ENCODE measurements at regions of chr13 and their contacts with region 1.

Region 1: DNA sequence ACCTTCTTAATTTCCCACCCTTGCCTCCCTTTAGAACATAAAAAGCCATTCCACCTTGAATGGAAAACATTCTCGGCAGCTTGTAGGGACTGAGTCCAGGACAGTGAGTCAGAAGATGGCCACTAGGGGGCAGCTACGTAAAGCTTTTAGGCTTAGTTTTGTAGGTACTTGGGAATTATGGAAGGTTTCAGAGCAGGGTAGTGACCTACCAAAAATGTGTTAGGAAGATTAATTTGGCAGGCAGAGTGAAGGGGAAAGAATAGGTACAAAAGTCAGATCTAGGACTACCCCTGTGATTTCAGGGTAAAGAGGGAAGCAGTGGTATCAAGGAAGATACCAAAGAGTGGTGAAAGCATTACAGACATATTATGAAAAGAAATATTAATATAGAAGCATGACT is 198.4 kb downstream of the NDFIP2 start:
- DNase-seq: peak; percentile 83
- H3K4me3 ChIP-seq: no peak overlapping the region
- H3K27ac ChIP-seq: no peak overlapping the region
- H3K4me1 ChIP-seq: no peaks in the 10 kb centered on the region
- H3K27me3 ChIP-seq: no peaks in the 10 kb centered on the region
- CTCF ChIP-seq: peak; percentile 70 to 80
- POLR2A ChIP-seq: no peak

Region 2: DNA sequence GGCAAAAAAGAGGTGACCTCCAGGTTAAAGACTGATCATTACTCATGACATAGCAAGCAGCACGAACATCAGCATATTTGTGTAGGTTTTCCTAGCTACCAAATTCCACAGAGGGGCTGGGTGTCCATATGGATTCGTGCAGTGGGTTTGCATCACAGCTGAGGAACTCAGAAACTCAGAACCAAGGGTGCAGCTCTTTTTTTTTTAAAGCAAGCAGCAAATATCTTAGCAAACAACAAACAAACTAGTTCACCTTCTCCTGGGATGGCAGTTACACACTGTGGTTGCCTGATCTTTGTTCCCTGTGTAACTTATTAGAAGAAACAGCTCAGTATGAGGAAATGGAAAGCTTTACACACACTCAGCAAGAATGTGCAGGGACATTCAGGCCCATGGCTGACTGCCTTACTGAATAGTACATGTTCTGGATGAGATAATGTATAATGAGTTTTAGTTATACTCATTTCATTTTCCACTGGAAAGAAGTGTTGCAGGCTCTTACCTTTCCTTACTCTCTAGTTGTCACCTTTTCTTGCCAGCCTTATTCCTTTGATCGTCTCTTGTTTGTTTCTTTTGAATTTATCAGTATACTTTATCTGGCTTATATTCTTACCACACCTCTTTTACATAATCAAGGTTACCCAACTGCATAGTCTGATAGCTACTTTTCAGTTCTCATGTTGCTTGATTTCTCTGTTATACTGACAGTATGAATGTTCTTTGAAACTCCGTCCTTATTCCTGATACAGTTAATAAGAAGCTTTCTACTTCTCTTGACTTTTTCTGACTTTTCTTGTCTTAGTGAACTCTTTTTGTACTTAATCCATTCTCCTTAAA is 194.1 kb before region 1 on chr13:
- CTCF ChIA-PET with region 1: no interaction called
- POLR2A ChIA-PET with region 1: no interaction called
- dilution Hi-C with region 1: no loop called
- intact Hi-C with region 1: no loop called
- DNase-seq: no peak
- H3K4me3 ChIP-seq: no peak overlapping the region
- H3K27ac ChIP-seq: no peak overlapping the region
- H3K4me1 ChIP-seq: peaks cover 9% of the 10 kb centered on the region
- H3K27me3 ChIP-seq: peaks cover 0 to 3% of the 10 kb centered on the region in 2 experiments
- CTCF ChIP-seq: no peak
- POLR2A ChIP-seq: no peak

Region 3: DNA sequence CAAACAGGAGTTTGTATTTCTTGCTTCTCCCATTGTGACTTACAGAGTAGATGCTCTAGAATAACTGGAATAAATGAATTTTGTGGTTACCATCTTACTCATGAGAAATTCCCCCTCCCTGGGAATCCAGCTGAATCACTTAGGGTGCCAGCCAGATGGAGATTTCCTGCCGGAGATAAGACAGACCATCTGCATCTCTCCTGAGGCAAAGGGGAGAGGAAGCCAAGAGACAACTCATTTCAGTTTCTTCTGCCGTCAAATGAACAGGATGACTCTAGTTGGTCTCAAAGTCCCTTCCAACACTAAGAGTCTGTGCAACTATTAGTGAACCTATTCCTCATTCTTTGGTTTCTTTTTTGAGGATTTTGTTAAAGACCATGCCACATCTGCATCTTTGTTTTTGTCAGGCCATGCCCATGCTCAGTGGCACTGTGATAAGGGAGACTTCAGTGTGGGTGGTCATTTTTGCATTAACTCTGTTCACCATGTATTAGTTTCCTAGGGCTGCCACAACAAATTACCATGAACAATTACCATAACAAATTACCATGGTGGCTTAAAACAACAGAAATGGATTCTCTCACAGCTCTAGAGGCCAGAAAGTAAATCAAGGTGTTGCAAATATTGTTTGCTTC is 85.6 kb before region 1 on chr13:
- CTCF ChIA-PET with region 1: no interaction called
- POLR2A ChIA-PET with region 1: no interaction called
- dilution Hi-C with region 1: no loop called
- intact Hi-C with region 1: no loop called
- DNase-seq: no peak
- H3K4me3 ChIP-seq: no peak overlapping the region
- H3K27ac ChIP-seq: no peak overlapping the region
- H3K4me1 ChIP-seq: no peaks in the 10 kb centered on the region
- H3K27me3 ChIP-seq: peaks cover 0 to 2% of the 10 kb centered on the region in 2 experiments
- CTCF ChIP-seq: no peak
- POLR2A ChIP-seq: no peak

Region 4: GRCh38 chr13:79668201-79668752 is 11.1 kb before region 1 on chr13:
- CTCF ChIA-PET with region 1: interaction called, 21 read pairs
- POLR2A ChIA-PET with region 1: no interaction called
- dilution Hi-C with region 1: no loop called
- intact Hi-C with region 1: no loop called
- DNase-seq: no peak
- H3K4me3 ChIP-seq: no peak overlapping the region
- H3K27ac ChIP-seq: no peak overlapping the region
- H3K4me1 ChIP-seq: no peaks in the 10 kb centered on the region
- H3K27me3 ChIP-seq: no peaks in the 10 kb centered on the region
- CTCF ChIP-seq: no peak
- POLR2A ChIP-seq: no peak

Region 5: DNA sequence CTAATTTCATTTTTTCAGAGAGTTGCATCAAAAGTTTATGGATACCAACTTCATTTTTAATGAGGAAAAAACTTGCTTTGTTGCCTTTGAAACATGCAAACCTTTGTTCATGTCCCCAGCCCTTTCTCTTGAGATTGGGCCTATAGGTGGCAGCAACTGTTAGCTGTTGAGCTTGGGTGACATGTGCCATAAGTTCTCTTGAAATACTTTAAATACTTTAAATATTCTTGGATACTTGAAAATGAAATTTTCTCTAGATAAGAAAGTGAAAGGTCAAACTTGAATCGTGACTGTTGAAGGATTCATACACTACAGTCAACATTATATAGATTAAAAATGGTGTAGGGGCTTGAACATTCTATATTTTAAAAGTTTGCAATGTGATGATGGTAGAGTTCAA is 96.5 kb after region 1 on chr13:
- CTCF ChIA-PET with region 1: interaction called, 18 read pairs
- POLR2A ChIA-PET with region 1: no interaction called
- dilution Hi-C with region 1: no loop called
- intact Hi-C with region 1: loop called (anchors 1 kb)
- DNase-seq: peak; percentile 87
- H3K4me3 ChIP-seq: no peak overlapping the region
- H3K27ac ChIP-seq: no peak overlapping the region
- H3K4me1 ChIP-seq: peaks cover 4% of the 10 kb centered on the region
- H3K27me3 ChIP-seq: no peaks in the 10 kb centered on the region
- CTCF ChIP-seq: peak; percentile 65 to 67
- POLR2A ChIP-seq: no peak

Region 6: DNA sequence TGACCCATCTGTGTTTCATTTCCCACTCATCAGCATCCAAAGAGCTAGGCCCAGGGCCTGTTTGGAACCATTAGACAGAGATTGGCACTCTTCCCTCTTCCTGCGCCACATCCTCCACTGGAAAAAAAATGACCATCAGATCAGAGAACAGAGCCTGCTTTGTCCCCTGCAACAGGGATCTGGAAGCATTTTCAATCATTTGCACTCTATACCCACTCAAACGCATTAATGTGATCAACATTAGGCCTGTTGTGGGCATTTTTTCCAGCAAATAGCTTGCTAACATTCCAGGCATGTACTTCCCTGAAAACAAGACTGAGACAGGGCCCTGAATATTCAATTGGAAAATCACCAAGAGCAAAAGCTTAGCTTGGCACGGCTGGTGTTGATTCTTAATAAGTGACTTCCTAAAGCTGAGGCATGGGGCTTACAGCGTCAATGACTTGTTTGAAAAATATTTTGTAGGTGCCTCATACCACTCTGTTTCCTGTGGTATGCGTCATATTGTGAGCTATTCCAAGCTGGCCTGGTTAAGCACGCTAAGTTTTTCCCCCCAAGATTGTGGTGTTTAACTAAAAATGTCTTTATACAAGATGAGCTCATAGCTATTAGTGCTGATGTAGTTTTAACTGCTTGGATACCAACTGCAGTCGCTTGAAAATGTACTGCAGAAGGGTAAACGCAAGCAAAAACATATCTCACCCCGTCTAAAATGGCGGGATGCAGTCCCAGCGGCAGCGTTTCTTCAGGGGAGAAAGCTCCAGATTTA is 257.2 kb after region 1 on chr13:
- CTCF ChIA-PET with region 1: interaction called, 15 read pairs
- POLR2A ChIA-PET with region 1: interaction called, 3 read pairs
- dilution Hi-C with region 1: no loop called
- intact Hi-C with region 1: loop called (anchors 2 kb)
- DNase-seq: peak; percentile 100
- H3K4me3 ChIP-seq: peak overlapping the region in 1 of 3 experiments; percentile 6
- H3K27ac ChIP-seq: peak overlapping the region; percentile 99
- H3K4me1 ChIP-seq: peaks cover 62% of the 10 kb centered on the region
- H3K27me3 ChIP-seq: no peaks in the 10 kb centered on the region
- CTCF ChIP-seq: no peak
- POLR2A ChIP-seq: no peak

Region 7: DNA sequence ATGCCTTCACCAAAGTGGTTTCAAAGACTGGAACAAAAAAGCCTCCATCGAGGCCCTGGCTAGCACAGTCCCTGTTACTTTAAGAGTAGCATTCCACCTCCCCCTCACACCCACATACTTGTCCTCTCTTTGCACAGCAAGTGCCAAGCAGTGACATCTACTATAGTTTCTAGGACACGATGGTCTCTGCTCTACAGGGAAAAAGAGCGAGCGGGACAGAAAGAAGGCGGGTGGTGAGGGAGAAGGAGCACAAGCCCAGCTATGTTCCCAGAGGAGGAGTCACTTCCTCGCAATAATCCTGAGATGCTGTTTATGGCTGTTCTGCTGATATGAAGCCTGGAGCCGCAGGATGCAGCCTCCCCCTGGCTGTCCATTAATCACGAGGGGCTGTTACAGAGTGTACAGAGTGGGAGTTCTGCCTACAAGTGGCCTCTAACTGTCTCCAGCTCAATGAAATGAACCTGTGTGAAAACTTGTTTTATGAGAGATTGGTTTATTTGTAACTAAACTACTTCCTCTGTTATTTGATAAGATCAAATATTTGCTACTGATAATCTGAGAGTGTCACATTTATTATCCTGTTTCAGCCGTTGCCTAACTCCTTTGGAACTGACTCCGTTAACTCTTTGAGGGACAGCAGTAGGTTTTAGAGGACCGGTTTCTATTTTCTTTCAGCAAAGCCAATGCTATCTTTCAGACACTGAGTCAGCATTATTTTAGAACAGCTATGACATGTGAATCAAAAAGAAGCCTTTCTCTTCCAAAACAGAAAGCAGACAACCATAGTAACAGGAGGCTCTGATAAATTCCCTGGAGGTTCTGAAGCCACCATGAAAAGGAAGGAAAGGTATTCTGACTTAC is 453.6 kb after region 1 on chr13:
- CTCF ChIA-PET with region 1: interaction called, 6 read pairs
- POLR2A ChIA-PET with region 1: no interaction called
- dilution Hi-C with region 1: no loop called
- intact Hi-C with region 1: loop called (anchors 10 kb)
- DNase-seq: peak; percentile 84
- H3K4me3 ChIP-seq: peak overlapping the region in 1 of 3 experiments; percentile 21
- H3K27ac ChIP-seq: peak overlapping the region; percentile 32
- H3K4me1 ChIP-seq: peaks cover 23% of the 10 kb centered on the region
- H3K27me3 ChIP-seq: no peaks in the 10 kb centered on the region
- CTCF ChIP-seq: no peak
- POLR2A ChIP-seq: no peak

Region 8: DNA sequence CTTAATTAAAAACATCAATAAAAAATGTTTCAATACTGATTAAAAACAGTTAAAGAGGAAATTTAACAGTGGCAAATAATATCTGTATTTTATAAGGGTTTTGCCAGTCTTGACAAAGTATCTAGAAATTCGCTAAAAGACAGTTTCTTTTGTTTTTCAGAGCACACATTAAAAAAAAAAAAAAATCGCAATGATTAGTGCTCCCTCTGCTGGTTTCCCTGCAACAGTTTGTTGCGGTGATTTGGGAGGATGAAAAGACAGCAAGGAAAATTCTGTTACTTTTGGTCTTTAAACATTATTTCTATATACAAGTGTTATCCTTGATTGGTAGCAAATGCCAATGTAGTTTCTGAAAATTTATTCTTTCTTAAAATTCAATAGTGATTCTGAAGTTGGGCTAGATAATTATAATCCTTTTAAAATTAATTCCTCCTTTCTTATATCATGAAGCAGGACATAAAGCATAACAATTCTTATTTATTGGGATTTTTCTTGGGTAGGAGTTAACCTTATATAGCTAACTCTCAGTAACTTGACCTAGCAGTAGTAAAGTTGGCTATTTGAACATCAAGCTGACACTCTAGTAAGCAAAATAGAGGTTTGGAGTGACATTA is 684.7 kb after region 1 on chr13:
- CTCF ChIA-PET with region 1: interaction called, 15 read pairs
- POLR2A ChIA-PET with region 1: no interaction called
- dilution Hi-C with region 1: no loop called
- intact Hi-C with region 1: loop called (anchors 1 kb)
- DNase-seq: peak; percentile 46
- H3K4me3 ChIP-seq: peak overlapping the region in 1 of 3 experiments; percentile 34
- H3K27ac ChIP-seq: no peak overlapping the region
- H3K4me1 ChIP-seq: peaks cover 5% of the 10 kb centered on the region
- H3K27me3 ChIP-seq: no peaks in the 10 kb centered on the region
- CTCF ChIP-seq: peak; percentile 62 to 65
- POLR2A ChIP-seq: no peak

Region 9: GRCh38 chr13:80510686-80511085 is 831.4 kb after region 1 on chr13:
- CTCF ChIA-PET with region 1: no interaction called
- POLR2A ChIA-PET with region 1: no interaction called
- dilution Hi-C with region 1: no loop called
- intact Hi-C with region 1: no loop called
- DNase-seq: no peak
- H3K4me3 ChIP-seq: no peak overlapping the region
- H3K27ac ChIP-seq: no peak overlapping the region
- H3K4me1 ChIP-seq: no peaks in the 10 kb centered on the region
- H3K27me3 ChIP-seq: no peaks in the 10 kb centered on the region
- CTCF ChIP-seq: no peak
- POLR2A ChIP-seq: no peak

Region 10: GRCh38 chr13:80979035-80979641 is 1299.8 kb after region 1 on chr13:
- CTCF ChIA-PET with region 1: interaction called, 21 read pairs
- POLR2A ChIA-PET with region 1: no interaction called
- dilution Hi-C with region 1: no loop called
- intact Hi-C with region 1: no loop called
- DNase-seq: peak; percentile 73
- H3K4me3 ChIP-seq: no peak overlapping the region
- H3K27ac ChIP-seq: no peak overlapping the region
- H3K4me1 ChIP-seq: no peaks in the 10 kb centered on the region
- H3K27me3 ChIP-seq: no peaks in the 10 kb centered on the region
- CTCF ChIP-seq: peak; percentile 78 to 86
- POLR2A ChIP-seq: no peak